ENCODE measurements at regions of chr19 and their contacts with region 1.

Region 1: GRCh38 chr19:45016388-45017319 is 15.4 kb downstream of the RELB start:
- DNase-seq: peak; percentile 99
- H3K4me3 ChIP-seq: peak overlapping the region; percentile 44
- H3K27ac ChIP-seq: peak overlapping the region; percentile 100
- H3K4me1 ChIP-seq: peaks cover 66% of the 10 kb centered on the region
- CTCF ChIP-seq: peak; percentile 91

Region 2: DNA sequence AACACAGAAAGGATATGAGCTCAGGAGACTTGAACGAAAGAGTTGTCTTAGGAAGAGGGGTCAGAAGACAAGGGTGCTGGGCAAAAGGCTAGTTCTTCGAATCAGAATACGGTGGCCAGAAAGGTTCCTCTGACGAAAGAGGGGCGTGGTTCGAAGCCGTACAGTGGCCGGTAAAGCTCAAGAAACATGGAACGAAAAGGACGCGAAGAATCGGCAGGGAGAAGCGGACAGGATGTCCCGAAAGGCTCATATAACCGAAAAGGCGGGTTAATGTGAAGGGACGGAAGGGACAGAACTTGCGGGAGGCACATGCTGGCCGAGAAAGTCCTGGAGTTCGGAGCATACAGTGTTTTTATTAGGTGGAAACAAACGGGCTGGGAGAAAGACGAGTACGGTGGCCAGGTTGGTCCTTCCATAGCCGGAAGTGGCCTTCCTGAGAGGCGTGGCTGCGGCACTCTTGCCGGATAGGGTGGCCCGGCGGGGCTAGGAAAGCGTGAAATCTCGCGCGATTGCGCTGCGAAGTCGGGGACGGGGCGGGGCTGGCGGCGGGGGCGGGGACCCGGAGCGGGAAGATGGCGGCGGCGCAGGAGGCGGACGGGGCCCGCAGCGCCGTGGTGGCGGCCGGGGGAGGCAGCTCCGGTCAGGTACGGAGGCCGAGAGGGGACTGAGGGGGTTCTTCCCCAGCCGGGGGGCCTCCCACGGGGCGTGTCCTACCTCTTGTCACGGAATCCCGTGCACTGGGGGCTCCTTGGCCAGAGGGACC is 61.6 kb before region 1 on chr19 and contains the start of gene CLPTM1:
- CTCF ChIA-PET with region 1: no interaction called
- POLR2A ChIA-PET with region 1: no interaction called
- intact Hi-C with region 1: loop called (anchors 5 kb)
- DNase-seq: peak; percentile 97
- H3K4me3 ChIP-seq: peak within 1 kb of the TSS; percentile 75
- H3K27ac ChIP-seq: peak within 1 kb of the TSS; percentile 82
- H3K4me1 ChIP-seq: peaks cover 51% of the 10 kb centered on the region
- CTCF ChIP-seq: no peak
- total RNA-seq, gene CLPTM1: 32.2 and 34.0 TPM in 2 replicates

Region 3: DNA sequence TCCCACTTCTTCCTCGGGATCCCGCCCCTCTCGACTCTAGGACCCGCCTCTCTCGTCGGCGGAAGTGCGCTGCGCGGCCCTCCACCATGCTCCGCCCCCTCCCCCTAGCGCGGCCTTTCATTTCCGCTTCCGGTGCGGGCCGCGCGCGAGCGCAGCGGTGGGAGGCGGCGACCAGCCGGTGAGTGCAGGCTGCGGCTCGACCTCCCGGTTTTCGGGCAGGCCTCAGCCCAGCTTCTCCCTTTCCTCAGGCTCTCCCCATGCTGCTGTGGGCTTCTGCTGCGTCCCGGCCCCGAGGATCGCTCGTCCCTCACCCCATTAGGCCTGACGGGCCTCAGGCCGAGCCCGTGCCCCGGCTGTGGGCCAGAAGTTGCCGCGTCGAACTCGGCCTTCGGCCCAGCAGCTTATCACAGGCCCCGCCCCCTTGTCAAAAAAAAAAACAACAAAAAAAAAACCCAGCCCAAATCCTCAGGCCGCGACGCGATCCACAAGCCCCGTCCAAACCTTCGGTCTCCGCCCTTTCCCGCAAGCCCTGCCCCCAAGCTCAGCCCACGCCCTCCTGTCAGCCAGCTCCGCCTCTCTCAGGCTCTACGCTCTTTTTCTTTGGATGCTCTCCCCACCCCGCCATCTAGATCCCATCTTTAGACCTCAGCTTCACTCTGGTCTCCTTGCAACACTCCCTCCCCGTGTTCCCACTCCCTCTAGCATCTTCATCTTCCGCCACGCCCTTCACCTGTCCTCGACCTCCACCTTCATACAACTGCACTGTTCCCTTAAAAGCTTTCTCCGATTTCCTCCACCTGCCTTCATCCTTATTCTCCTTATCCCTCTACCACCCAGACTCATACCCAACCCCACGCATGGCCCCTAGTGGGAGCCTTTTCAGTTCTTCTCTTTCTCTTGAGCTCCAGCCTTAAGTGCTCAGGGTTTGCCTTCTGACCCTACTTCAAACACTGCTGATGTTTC is 22.6 kb after region 1 on chr19 and contains the start of gene CLASRP:
- CTCF ChIA-PET with region 1: no interaction called
- POLR2A ChIA-PET with region 1: no interaction called
- intact Hi-C with region 1: loop called (anchors 2 kb)
- DNase-seq: peak; percentile 89
- H3K4me3 ChIP-seq: peak within 1 kb of the TSS; percentile 87
- H3K27ac ChIP-seq: peak within 1 kb of the TSS; percentile 77
- H3K4me1 ChIP-seq: peaks cover 27% of the 10 kb centered on the region
- CTCF ChIP-seq: 0 out of 2 replicates have a peak, but pooled peaks have one; percentile 16
- total RNA-seq, gene CLASRP: 142 and 152 TPM in 2 replicates

Region 4: DNA sequence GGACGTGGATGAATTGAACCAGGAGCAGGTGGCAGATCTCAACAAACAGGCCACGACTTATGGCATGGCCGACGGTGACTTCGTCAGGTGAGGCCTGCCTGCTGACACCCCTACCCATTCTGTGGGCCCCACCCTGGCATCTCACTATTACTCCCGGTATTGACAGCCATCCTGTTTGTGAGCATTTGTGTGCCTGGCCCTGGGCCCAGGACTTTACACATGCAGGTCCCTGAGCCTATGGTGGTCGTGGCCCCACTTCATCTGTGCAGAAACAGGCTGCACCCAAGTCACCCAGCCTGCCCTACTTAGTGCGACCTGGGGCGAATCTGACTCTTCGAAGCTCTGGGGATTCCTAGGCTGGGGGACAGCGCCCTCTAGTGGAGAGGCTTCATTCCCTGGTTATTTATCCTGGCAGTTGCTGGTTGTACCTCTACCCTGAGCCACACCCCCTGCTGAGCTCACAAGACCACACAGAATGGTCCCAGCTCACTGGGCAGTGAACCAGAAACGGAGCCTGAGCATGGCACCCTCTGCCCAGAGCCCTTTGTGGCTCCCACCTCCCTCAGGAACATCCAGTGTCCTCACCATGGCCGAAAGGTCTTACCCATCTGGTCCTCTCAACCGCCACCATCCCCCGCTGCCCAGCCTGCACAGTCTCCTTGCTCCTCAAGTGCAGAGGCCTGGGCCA is 42.8 kb after region 1 on chr19:
- CTCF ChIA-PET with region 1: no interaction called
- POLR2A ChIA-PET with region 1: no interaction called
- intact Hi-C with region 1: loop called (anchors 1 kb)
- DNase-seq: peak; percentile 88
- H3K4me3 ChIP-seq: no peak overlapping the region
- H3K27ac ChIP-seq: peak overlapping the region; percentile 14
- H3K4me1 ChIP-seq: peaks cover 31% of the 10 kb centered on the region
- CTCF ChIP-seq: peak; percentile 96

Region 5: DNA sequence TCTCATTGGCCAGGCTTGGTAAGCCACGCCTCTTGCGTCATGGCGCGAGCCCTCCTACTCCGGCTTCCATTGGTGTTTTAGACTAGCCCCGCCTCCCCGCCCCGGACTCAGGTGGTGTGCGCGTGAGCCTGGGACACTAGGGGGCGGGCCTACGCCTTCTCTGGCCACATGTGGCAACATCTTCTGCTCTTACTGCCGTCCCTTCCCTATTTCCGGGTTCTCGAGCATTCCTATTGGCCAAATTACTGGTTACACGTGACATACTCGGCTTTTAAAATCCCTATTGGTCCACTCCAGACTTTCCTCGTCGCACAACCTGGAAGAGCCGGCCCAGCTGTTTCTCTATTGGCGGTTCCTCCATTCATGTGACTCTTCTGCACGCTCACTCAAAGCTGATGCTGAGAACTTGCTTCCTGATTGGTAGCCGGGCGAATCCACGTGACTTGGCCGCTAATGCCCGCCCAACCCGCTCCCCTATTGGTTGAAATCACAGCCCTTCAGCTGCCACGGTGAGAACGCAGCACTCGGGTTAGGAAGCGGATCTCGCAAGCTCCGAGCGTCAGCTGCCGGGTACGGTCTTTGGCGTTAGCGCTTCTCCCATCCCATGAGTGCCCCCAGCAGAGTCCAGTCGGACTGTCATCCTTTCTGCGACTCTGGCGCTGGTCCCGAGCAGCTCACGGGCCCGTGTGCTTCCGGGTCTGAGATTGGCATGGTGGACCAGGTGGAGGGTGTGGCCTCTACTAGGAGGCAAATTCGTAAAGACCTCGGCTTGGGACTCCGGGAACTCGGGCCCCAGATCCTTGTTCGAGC is 161.8 kb after region 1 on chr19 and contains the start of gene BLOC1S3:
- CTCF ChIA-PET with region 1: no interaction called
- POLR2A ChIA-PET with region 1: no interaction called
- intact Hi-C with region 1: loop called (anchors 1 kb)
- DNase-seq: peak; percentile 100
- H3K4me3 ChIP-seq: peak within 1 kb of the TSS; percentile 88
- H3K27ac ChIP-seq: peak within 1 kb of the TSS; percentile 66
- H3K4me1 ChIP-seq: peaks cover 25% of the 10 kb centered on the region
- CTCF ChIP-seq: peak; percentile 63
- total RNA-seq, gene BLOC1S3: 8.1 and 9.7 TPM in 2 replicates